Naive thymus-derived CD4-positive, alpha-beta T cell (primary cell): ENCODE measurements at regions of chr1 and their contacts with region 1.

Region 1: GRCh38 chr1:226332947-226333346 is 24.0 kb upstream of the LIN9 start:
- DNase-seq: no peak
- ATAC-seq: no peak
- H3K4me3 ChIP-seq: peak overlapping the region; percentile 13
- H3K4me3 Mint-ChIP-seq: peak overlapping the region in 8 of 10 donors; percentile 26 to 74 (median 68)
- H3K27ac ChIP-seq: no peak overlapping the region
- H3K27ac Mint-ChIP-seq: peak overlapping the region in 2 of 9 donors; percentile 25 to 43
- H3K4me1 ChIP-seq: peaks cover 4% of the 10 kb centered on the region in 2 donors
- H3K4me1 Mint-ChIP-seq: peaks cover 0 to 11% (median 6%) of the 10 kb centered on the region in 7 donors
- H3K27me3 ChIP-seq: no peaks in the 10 kb centered on the region
- H3K27me3 Mint-ChIP-seq: peaks cover 0 to 2% (median 0%) of the 10 kb centered on the region in 5 donors

Region 2: GRCh38 chr1:225642177-225642576 is 690.8 kb before region 1 on chr1:
- CTCF ChIA-PET with region 1: no interaction called
- POLR2A ChIA-PET with region 1: no interaction called
- intact Hi-C with region 1: no loop called
- DNase-seq: no peak
- ATAC-seq: no peak
- H3K4me3 ChIP-seq: no peak overlapping the region
- H3K4me3 Mint-ChIP-seq: no peak overlapping the region
- H3K27ac ChIP-seq: no peak overlapping the region
- H3K27ac Mint-ChIP-seq: no peak overlapping the region
- H3K4me1 ChIP-seq: no peaks in the 10 kb centered on the region
- H3K4me1 Mint-ChIP-seq: no peaks in the 10 kb centered on the region
- H3K27me3 ChIP-seq: no peaks in the 10 kb centered on the region
- H3K27me3 Mint-ChIP-seq: peaks cover 4 to 30% (median 18%) of the 10 kb centered on the region in 5 donors

Region 3: DNA sequence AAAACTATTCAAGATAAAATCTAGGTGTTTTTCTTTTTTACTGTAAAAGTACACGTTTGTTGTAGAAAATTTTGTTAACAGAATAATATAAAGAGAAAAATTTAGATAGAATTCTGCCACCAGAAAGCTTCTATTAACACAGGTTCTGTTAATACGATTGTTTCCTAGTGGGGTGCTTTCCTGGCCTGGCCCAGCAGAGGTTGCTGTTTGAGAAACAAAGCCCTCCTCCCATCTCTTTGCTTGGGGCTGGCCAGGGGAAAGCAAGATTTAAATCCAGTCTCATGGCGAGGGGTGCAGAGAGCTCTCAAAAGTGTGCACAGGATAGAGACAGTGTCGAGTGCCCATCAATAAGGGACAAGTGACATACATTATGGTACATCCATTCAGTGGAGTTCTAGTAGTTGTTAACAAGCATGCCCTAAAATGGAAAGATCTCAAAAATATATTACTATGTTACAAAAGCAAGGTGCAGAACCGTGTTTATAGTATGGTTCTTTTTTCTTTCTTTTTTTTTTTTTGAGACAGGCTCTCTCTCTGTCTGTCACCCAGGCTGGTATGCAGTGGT is 131.8 kb before region 1 on chr1:
- CTCF ChIA-PET with region 1: no interaction called
- POLR2A ChIA-PET with region 1: no interaction called
- intact Hi-C with region 1: loop called (anchors 1 to 2 kb)
- DNase-seq: no peak
- ATAC-seq: no peak
- H3K4me3 ChIP-seq: no peak overlapping the region
- H3K4me3 Mint-ChIP-seq: no peak overlapping the region
- H3K27ac ChIP-seq: no peak overlapping the region
- H3K27ac Mint-ChIP-seq: no peak overlapping the region
- H3K4me1 ChIP-seq: no peaks in the 10 kb centered on the region
- H3K4me1 Mint-ChIP-seq: peaks cover 0 to 5% (median 0%) of the 10 kb centered on the region in 7 donors
- H3K27me3 ChIP-seq: no peaks in the 10 kb centered on the region
- H3K27me3 Mint-ChIP-seq: peaks cover 0 to 18% (median 4%) of the 10 kb centered on the region in 5 donors

Region 4: DNA sequence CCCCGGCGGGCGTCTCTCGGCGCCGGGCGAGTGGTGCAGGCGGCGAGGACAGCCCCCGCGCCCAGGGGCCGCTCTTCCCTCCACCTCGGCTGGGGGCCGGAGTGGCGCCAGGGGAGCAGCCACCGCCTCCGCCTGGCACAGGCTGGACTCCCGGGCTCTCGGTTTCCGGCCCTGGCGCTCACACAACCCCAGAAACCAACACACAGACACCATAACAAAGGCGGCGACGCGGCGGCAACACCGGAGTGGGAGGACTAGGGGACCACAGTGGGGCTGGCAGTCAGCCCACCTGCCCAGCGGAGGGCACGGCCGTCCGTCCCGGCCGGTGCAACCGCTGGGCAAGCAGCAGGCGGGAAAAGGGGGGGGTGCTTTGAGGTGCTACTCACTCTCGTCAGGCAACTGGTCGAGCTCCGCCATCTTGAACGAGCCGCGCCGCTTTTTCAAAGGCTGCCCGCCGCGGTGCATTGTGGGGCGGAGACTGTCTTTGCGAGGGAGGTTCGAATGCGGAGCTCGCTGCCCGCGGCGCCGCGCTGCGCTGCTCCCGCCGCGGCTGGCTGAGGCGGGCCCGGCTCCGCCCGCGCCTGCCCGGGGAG is 24.1 kb before region 1 on chr1 and contains the start of gene LIN9:
- CTCF ChIA-PET with region 1: interaction called, 5 read pairs
- POLR2A ChIA-PET with region 1: interaction called, 7 read pairs
- intact Hi-C with region 1: loop called (anchors 1 to 2 kb)
- DNase-seq: peak; percentile 83 to 94 (median 88)
- ATAC-seq: peak; percentile 97
- H3K4me3 ChIP-seq: peak within 1 kb of the TSS; percentile 99
- H3K4me3 Mint-ChIP-seq: peak within 1 kb of the TSS; percentile 88 to 95 (median 92)
- H3K27ac ChIP-seq: peak within 1 kb of the TSS; percentile 76
- H3K27ac Mint-ChIP-seq: peak within 1 kb of the TSS; percentile 34 to 97 (median 85)
- H3K4me1 ChIP-seq: peaks cover 5% of the 10 kb centered on the region in 2 donors
- H3K4me1 Mint-ChIP-seq: peaks cover 14 to 37% (median 22%) of the 10 kb centered on the region in 7 donors
- H3K27me3 ChIP-seq: peaks cover 0 to 4% of the 10 kb centered on the region in 2 donors
- H3K27me3 Mint-ChIP-seq: peaks cover 5 to 19% (median 14%) of the 10 kb centered on the region in 5 donors
- total RNA-seq, gene LIN9: 2.0 to 8.0 (median 5.0) TPM

Region 5: DNA sequence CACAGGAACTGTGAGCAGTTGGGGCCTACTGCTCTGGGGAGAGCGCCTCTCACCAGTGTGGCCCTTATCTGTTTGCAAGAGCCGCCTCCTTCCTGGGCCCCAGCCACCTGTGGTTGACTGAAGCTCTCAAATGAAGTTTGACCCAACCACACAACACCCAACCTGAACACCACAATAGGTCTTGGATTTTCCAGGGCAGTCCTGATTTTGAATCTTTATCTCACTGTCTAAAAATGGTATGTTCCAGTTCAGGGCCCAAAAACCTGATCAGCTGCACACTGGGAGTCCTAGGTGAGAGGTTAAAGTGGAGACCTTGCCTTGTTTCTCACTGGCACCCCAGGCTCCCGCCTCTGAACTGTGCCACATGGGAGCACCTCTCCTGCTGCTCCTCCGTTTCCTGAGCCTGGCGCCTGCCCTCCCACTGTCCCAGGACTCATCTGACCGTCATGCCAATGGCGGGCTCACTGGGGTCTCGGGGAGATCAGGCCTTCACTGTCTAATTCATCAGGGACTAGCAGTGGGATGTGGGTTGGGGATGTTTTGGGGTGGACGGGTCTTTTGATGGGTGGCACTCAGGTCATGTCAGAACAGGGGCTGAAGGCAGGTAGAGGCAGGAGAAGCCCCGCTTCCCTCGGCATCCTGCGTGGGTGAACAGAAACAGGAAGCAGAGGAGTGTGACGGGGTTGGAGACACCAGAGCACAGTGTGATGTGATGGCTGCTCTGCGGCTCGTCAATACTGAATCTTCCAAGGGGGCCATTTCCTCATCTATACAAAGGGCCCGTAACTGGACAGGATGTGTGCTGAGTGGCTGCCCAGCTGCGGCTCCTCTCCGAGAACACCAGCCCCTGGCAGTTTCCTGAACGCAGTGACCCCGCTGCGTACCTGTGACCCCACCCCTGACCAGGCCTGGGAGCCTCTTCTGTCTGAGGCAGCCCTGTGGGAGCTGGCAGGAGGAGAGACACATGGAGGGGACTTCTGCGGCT is 465.8 kb after region 1 on chr1:
- CTCF ChIA-PET with region 1: no interaction called
- POLR2A ChIA-PET with region 1: no interaction called
- intact Hi-C with region 1: no loop called
- DNase-seq: peak; percentile 24 to 75 (median 67)
- ATAC-seq: peak; percentile 85
- H3K4me3 ChIP-seq: peak overlapping the region; percentile 33
- H3K4me3 Mint-ChIP-seq: peak overlapping the region; percentile 66 to 86 (median 72)
- H3K27ac ChIP-seq: peak overlapping the region; percentile 67
- H3K27ac Mint-ChIP-seq: peak overlapping the region; percentile 96 to 100 (median 99)
- H3K4me1 ChIP-seq: peaks cover 31 to 33% of the 10 kb centered on the region in 2 donors
- H3K4me1 Mint-ChIP-seq: peaks cover 27 to 47% (median 40%) of the 10 kb centered on the region in 7 donors
- H3K27me3 ChIP-seq: no peaks in the 10 kb centered on the region
- H3K27me3 Mint-ChIP-seq: peaks cover 0 to 12% (median 0%) of the 10 kb centered on the region in 5 donors